Activated naive CD4-positive, alpha-beta T cell treated with anti-CD3 and anti-CD28 coated beads for 36 hours (primary cell): ENCODE measurements at regions of chr3 and their contacts with region 1.

Region 1: GRCh38 chr3:197002701-197003454 is 26.7 kb downstream of the MELTF start:
- DNase-seq: peak; percentile 92
- H3K4me3 Mint-ChIP-seq: no peak overlapping the region
- H3K27ac Mint-ChIP-seq: no peak overlapping the region
- H3K4me1 Mint-ChIP-seq: peaks cover 8% of the 10 kb centered on the region
- H3K27me3 Mint-ChIP-seq: no peaks in the 10 kb centered on the region

Region 2: GRCh38 chr3:196914866-196915265 is 88.0 kb before region 1 on chr3:
- CTCF ChIA-PET with region 1: no interaction called
- intact Hi-C with region 1: no loop called
- DNase-seq: no peak
- H3K4me3 Mint-ChIP-seq: no peak overlapping the region
- H3K27ac Mint-ChIP-seq: no peak overlapping the region
- H3K4me1 Mint-ChIP-seq: no peaks in the 10 kb centered on the region
- H3K27me3 Mint-ChIP-seq: no peaks in the 10 kb centered on the region

Region 3: DNA sequence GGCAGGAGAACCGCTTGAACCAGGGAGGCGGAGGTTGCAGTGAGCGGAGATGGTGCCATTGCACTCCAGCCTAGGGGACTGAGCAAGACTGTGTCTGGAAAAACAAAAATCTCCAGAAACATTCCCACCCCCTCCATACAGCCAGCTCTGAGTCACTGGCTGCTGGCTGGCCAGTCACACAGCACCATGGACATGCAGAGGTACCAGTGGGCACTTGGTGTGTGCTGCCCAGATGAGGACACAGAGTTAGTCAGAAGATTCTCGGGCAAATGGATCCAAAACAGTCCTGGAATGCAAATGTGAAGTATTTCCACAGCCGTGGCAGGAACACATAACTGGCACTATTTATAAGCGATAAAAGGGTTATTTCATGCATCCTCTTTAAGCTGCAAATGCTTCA is 508.3 kb after region 1 on chr3:
- CTCF ChIA-PET with region 1: no interaction called
- intact Hi-C with region 1: loop called (anchors 1 kb)
- DNase-seq: no peak
- H3K4me3 Mint-ChIP-seq: no peak overlapping the region
- H3K27ac Mint-ChIP-seq: no peak overlapping the region
- H3K4me1 Mint-ChIP-seq: peaks cover 6% of the 10 kb centered on the region
- H3K27me3 Mint-ChIP-seq: no peaks in the 10 kb centered on the region